Endothelial cell of umbilical vein (primary cell): ENCODE measurements at regions of chr3 and their contacts with region 1.

Region 1: DNA sequence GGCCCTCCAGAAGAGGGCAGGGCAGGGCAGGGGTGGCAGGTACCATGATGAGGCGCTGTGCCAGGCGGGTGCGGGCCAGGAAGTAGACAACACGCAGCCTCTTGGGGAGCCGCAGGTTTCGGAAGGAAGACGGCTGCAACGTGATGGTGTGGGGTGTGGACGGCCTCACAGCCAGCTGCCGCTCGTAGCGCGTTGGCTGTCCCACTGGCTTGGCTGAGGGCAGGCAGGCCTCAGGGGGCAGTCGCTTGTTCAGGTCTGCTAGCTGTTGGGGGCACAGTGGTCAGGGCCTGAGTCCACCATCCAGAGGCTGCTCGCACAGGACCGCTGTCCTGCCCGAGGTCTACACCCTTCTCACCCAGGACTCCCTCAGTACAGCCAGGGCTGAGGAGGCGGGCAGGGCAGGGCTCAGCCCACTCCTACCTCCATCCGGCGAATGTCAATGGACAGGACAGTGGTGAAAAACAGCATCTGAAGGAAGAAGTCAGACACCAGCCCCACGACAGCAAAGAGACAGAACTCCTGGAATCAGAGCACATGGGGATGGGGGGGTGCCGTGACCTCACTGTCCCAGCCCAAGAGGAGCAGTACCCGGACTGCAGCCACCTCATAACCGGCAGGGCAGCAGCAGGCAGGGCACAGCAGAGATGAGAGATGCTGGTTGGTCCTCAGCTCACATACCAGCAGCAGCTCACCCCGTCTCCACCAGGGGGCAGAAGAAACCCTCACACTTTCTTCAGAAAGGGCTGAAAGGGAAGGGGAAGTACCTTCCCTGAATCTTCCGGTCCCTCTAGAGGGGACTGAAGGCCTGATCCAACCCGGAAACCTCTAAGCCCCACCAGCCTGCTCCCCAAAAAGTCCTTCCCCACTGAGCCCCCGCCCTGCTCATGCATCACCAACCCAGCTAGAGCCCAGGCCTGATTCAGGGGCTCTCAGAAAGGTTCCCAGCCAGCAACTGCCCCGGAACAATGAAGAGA is 40.0 kb downstream of the PTPN23 start:
- DNase-seq: peak; percentile 82
- H3K4me3 ChIP-seq: no peak overlapping the region
- H3K27ac ChIP-seq: peak overlapping the region; percentile 16
- H3K4me1 ChIP-seq: no peaks in the 10 kb centered on the region
- H3K27me3 ChIP-seq: no peaks in the 10 kb centered on the region
- CTCF ChIP-seq: peak; percentile 95 to 97
- POLR2A ChIP-seq: no peak

Region 2: DNA sequence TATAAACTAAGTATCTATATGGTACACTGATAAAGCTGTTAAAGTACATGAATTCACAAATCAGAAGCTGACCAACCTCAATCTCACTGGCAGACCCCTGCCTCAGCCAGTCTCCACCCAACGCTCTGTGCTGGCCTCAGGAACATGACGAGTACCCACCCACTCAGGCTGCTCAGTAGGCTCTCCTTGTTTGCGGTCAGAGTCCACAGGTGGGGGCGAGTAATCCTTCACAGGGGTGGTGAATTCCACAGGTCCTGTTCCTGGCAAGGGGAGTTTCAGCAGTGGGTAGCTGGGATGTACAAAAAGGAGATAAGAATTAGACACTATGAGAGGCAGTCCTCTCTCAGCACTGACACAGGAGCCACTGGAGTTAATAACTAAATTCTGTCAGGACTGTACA is 14.1 kb after region 1 on chr3:
- CTCF ChIA-PET with region 1: interaction called, 12 read pairs
- POLR2A ChIA-PET with region 1: no interaction called
- dilution Hi-C with region 1: no loop called
- intact Hi-C with region 1: no loop called
- DNase-seq: no peak
- H3K4me3 ChIP-seq: no peak overlapping the region
- H3K27ac ChIP-seq: no peak overlapping the region
- H3K4me1 ChIP-seq: no peaks in the 10 kb centered on the region
- H3K27me3 ChIP-seq: no peaks in the 10 kb centered on the region
- CTCF ChIP-seq: no peak
- POLR2A ChIP-seq: no peak

Region 3: DNA sequence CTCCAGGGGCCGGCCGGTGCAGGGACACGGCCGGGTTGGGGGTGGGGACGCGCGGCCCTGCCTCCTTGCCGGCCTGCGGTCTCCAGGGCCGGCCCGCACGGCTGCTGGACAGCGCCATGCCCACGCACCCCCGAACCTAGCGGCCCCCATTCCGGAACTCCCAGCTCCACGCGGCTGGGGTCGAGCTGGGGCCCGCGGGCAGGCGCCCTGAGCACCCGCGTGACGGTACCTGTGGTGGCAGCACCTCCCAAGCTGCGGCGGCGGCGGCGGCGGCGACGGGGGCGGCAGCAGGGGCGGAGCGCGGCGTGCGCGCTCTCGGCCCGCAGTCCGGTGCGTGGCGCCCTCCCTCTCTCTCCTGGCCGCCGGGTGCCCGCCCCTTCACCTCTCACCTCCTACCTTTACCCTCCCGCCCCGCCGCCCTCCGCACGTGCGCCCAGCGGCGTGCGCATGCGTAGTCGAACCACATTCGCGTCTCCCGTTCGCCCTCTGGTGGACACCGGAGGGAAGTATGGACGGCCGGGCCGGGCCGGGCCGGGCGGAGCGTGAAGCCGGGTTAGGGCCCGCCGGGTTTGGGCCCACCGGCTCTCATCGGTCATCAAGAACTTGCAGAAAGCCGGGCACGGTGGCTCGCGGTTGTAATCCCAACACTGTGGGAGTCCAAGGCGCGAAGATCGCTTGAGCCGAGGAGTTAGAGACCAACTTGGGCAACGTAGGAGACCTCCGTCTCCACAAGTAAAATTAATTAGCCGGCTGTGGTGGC is 55.0 kb after region 1 on chr3 and contains the start of gene SCAP:
- CTCF ChIA-PET with region 1: interaction called, 79 read pairs
- POLR2A ChIA-PET with region 1: no interaction called
- dilution Hi-C with region 1: no loop called
- intact Hi-C with region 1: loop called (anchors 1 kb)
- DNase-seq: peak; percentile 85
- H3K4me3 ChIP-seq: peak within 1 kb of the TSS; percentile 60 to 83 (median 82)
- H3K27ac ChIP-seq: no peak within 1 kb of the TSS
- H3K4me1 ChIP-seq: no peaks in the 10 kb centered on the region
- H3K27me3 ChIP-seq: no peaks in the 10 kb centered on the region
- CTCF ChIP-seq: peak; percentile 84 to 95
- POLR2A ChIP-seq: peak; percentile 15
- total RNA-seq, gene SCAP: 53.6 and 59.0 TPM in 2 replicates

Region 4: DNA sequence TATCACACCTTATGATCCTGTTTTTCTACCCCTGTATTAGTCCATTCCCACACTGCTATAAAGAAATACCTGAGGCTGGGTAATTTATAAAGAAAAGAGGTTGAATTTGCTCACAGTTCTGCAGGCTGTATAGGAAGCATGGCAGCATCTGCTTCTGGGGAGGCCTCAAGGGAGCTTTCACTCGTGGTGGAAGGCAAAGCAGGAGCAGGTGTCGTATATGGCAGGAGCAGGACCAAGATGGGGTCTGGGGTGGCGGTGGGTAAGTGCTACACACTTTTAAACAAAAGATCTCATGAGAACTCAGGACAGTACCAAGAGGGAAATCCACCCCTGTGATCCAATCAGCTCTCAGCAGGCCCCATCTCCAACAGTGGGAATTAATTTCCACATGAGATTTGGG is 70.4 kb after region 1 on chr3:
- CTCF ChIA-PET with region 1: interaction called, 13 read pairs
- POLR2A ChIA-PET with region 1: no interaction called
- dilution Hi-C with region 1: no loop called
- intact Hi-C with region 1: no loop called
- DNase-seq: no peak
- H3K4me3 ChIP-seq: no peak overlapping the region
- H3K27ac ChIP-seq: no peak overlapping the region
- H3K4me1 ChIP-seq: no peaks in the 10 kb centered on the region
- H3K27me3 ChIP-seq: no peaks in the 10 kb centered on the region
- CTCF ChIP-seq: no peak
- POLR2A ChIP-seq: no peak

Region 5: GRCh38 chr3:47513125-47513929 is 92.5 kb after region 1 on chr3 and contains the start of gene ELP6:
- CTCF ChIA-PET with region 1: interaction called, 8 read pairs
- POLR2A ChIA-PET with region 1: no interaction called
- dilution Hi-C with region 1: no loop called
- intact Hi-C with region 1: loop called (anchors 1 kb)
- DNase-seq: peak; percentile 97
- H3K4me3 ChIP-seq: peak within 1 kb of the TSS; percentile 43 to 79 (median 64)
- H3K27ac ChIP-seq: peak within 1 kb of the TSS; percentile 71
- H3K4me1 ChIP-seq: peaks cover 12% of the 10 kb centered on the region
- H3K27me3 ChIP-seq: no peaks in the 10 kb centered on the region
- CTCF ChIP-seq: peak; percentile 52 to 78
- POLR2A ChIP-seq: peak; percentile 93
- total RNA-seq, gene ELP6: 48.1 and 48.4 TPM in 2 replicates

Region 6: GRCh38 chr3:47791193-47791855 is 370.5 kb after region 1 on chr3:
- CTCF ChIA-PET with region 1: interaction called, 13 read pairs
- POLR2A ChIA-PET with region 1: no interaction called
- dilution Hi-C with region 1: no loop called
- intact Hi-C with region 1: loop called (anchors 1 kb)
- DNase-seq: no peak
- H3K4me3 ChIP-seq: no peak overlapping the region
- H3K27ac ChIP-seq: no peak overlapping the region
- H3K4me1 ChIP-seq: no peaks in the 10 kb centered on the region
- H3K27me3 ChIP-seq: no peaks in the 10 kb centered on the region
- CTCF ChIP-seq: no peak
- POLR2A ChIP-seq: no peak